Aorta (tissue), 5 donors: ENCODE measurements at regions of chr13 and their contacts with region 1.

Region 1: DNA sequence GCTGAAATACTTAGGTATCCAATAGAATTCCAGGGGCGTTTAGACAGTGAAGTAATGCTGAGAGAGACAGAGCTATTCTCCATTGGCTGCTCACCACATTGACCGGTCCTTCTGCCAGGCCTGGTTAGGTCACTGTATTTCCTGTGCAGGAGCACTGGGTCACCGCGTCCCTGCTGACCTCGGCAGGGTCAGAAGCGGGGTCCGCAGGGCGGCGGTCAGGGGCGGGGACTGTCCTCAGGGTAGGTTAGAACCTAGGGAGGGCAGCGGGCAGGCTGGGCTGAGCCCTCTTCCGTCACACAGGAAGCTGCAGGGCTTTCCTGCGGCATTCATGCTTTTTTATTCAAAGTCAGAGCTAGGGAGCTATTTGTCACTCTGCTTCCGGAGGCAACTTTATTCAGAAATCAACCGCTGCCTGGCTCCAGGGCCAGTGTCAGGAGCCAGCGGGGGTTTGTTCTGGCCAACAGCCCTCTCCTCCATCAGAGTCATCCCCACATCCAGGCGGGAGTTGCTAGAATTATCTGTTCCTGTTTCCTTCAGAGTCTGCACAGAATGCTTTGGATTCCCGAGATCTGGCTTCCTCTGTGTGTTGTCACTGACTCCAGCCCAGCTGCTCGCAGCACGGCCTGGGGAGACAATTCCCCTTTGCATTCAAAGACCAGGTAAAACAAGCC is 81.2 kb upstream of the WASF3 start:
- DNase-seq: peak; percentile 56 to 80
- ATAC-seq: peak; percentile 47
- H3K4me3 ChIP-seq: no peak overlapping the region
- H3K27ac ChIP-seq: peak overlapping the region; percentile 51 to 60
- H3K4me1 ChIP-seq: no peaks in the 10 kb centered on the region
- H3K27me3 ChIP-seq: no peaks in the 10 kb centered on the region

Region 2: GRCh38 chr13:26425443-26426358 is 50.5 kb before region 1 on chr13:
- intact Hi-C with region 1: loop called in 1 of 2 experiments (anchors 10 kb)
- DNase-seq: no peak
- ATAC-seq: no peak
- H3K4me3 ChIP-seq: no peak overlapping the region
- H3K27ac ChIP-seq: peak overlapping the region in 1 of 2 donors; percentile 66
- H3K4me1 ChIP-seq: peaks cover 0 to 4% of the 10 kb centered on the region in 2 donors
- H3K27me3 ChIP-seq: no peaks in the 10 kb centered on the region

Region 3: GRCh38 chr13:26508885-26509284 is 32.6 kb after region 1 on chr13:
- intact Hi-C with region 1: no loop called
- DNase-seq: peak; percentile 82 to 90
- ATAC-seq: peak; percentile 90
- H3K4me3 ChIP-seq: no peak overlapping the region
- H3K27ac ChIP-seq: no peak overlapping the region
- H3K4me1 ChIP-seq: no peaks in the 10 kb centered on the region
- H3K27me3 ChIP-seq: no peaks in the 10 kb centered on the region

Region 4: GRCh38 chr13:26583662-26584061 is 107.4 kb after region 1 on chr13:
- intact Hi-C with region 1: no loop called
- DNase-seq: no peak
- ATAC-seq: no peak
- H3K4me3 ChIP-seq: no peak overlapping the region
- H3K27ac ChIP-seq: no peak overlapping the region
- H3K4me1 ChIP-seq: peaks cover 0 to 3% of the 10 kb centered on the region in 2 donors
- H3K27me3 ChIP-seq: no peaks in the 10 kb centered on the region

Region 5: DNA sequence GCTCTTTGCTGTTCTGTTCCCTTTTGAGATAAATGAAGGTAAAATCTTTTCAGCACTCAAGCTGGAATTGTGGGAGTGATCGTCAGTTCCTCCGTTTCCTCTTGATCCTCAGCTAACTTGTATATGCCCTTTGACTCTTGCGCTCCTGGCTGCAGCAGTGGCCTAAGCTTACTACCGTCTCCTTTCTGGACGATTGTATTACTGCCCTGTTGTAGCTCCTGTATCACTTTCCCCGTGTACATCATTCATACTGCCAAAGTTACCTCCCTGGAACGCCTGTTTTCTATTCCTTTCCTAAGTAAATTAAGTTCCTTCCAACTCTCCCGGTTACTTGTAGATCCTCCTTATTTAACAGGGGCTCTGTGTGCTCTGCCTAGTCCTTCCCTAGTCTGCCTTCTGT is 118.1 kb after region 1 on chr13:
- intact Hi-C with region 1: no loop called
- DNase-seq: no peak
- ATAC-seq: no peak
- H3K4me3 ChIP-seq: no peak overlapping the region
- H3K27ac ChIP-seq: no peak overlapping the region
- H3K4me1 ChIP-seq: peaks cover 0 to 3% of the 10 kb centered on the region in 2 donors
- H3K27me3 ChIP-seq: no peaks in the 10 kb centered on the region